MCF 10A (cell line): ENCODE measurements at regions of chr5 and their contacts with region 1.

Region 1: GRCh38 chr5:42889311-42889933 is 77.7 kb upstream of the SELENOP start:
- DNase-seq: peak; percentile 88
- H3K4me3 Mint-ChIP-seq: no peak overlapping the region
- H3K27ac Mint-ChIP-seq: no peak overlapping the region
- H3K4me1 Mint-ChIP-seq: no peaks in the 10 kb centered on the region
- H3K27me3 Mint-ChIP-seq: no peaks in the 10 kb centered on the region
- CTCF ChIP-seq: peak; percentile 85

Region 2: GRCh38 chr5:42005561-42006153 is 883.8 kb before region 1 on chr5:
- CTCF ChIA-PET with region 1: interaction called, 5 read pairs
- POLR2A ChIA-PET with region 1: no interaction called
- intact Hi-C with region 1: loop called (anchors 1 kb)
- DNase-seq: peak; percentile 33
- H3K4me3 Mint-ChIP-seq: no peak overlapping the region
- H3K27ac Mint-ChIP-seq: no peak overlapping the region
- H3K4me1 Mint-ChIP-seq: no peaks in the 10 kb centered on the region
- H3K27me3 Mint-ChIP-seq: no peaks in the 10 kb centered on the region
- CTCF ChIP-seq: peak; percentile 69

Region 3: DNA sequence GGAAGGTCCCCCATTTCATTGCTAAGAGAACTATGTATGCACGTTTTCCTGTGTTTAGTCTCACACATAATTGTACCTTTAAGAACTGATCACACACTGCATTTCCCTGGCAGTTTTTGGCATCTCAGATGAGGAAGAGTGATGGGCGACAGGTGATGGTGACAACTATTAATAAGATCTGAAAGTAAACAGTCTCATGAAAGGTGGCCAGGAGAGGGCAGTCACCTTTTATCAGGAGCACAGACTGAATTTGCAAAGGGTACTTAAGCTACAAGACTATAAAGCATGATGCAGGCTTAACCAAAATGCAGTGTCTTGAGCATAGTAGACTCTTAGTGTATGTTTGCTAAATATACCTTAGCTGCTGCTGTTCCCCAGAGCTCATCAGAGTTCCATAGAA is 374.7 kb before region 1 on chr5:
- CTCF ChIA-PET with region 1: interaction called, 7 read pairs
- POLR2A ChIA-PET with region 1: no interaction called
- intact Hi-C with region 1: loop called (anchors 10 kb)
- DNase-seq: peak; percentile 29
- H3K4me3 Mint-ChIP-seq: no peak overlapping the region
- H3K27ac Mint-ChIP-seq: no peak overlapping the region
- H3K4me1 Mint-ChIP-seq: peaks cover 5% of the 10 kb centered on the region
- H3K27me3 Mint-ChIP-seq: no peaks in the 10 kb centered on the region
- CTCF ChIP-seq: peak; percentile 11

Region 4: GRCh38 chr5:42656651-42657015 is 232.8 kb before region 1 on chr5:
- CTCF ChIA-PET with region 1: interaction called, 14 read pairs
- POLR2A ChIA-PET with region 1: no interaction called
- intact Hi-C with region 1: loop called (anchors 1 kb)
- DNase-seq: peak; percentile 18
- H3K4me3 Mint-ChIP-seq: peak overlapping the region; percentile 66
- H3K27ac Mint-ChIP-seq: peak overlapping the region; percentile 25
- H3K4me1 Mint-ChIP-seq: peaks cover 15% of the 10 kb centered on the region
- H3K27me3 Mint-ChIP-seq: no peaks in the 10 kb centered on the region
- CTCF ChIP-seq: peak; percentile 16

Region 5: GRCh38 chr5:42767491-42768105 is 121.8 kb before region 1 on chr5:
- CTCF ChIA-PET with region 1: interaction called, 37 read pairs
- POLR2A ChIA-PET with region 1: interaction called, 5 read pairs
- intact Hi-C with region 1: loop called (anchors 1 kb)
- DNase-seq: peak; percentile 58
- H3K4me3 Mint-ChIP-seq: no peak overlapping the region
- H3K27ac Mint-ChIP-seq: no peak overlapping the region
- H3K4me1 Mint-ChIP-seq: peaks cover 1% of the 10 kb centered on the region
- H3K27me3 Mint-ChIP-seq: no peaks in the 10 kb centered on the region
- CTCF ChIP-seq: peak; percentile 64

Region 6: GRCh38 chr5:42811591-42812446 is 77.6 kb before region 1 on chr5 and contains the start of gene SELENOP:
- CTCF ChIA-PET with region 1: interaction called, 29 read pairs
- POLR2A ChIA-PET with region 1: interaction called, 48 read pairs
- intact Hi-C with region 1: no loop called
- DNase-seq: peak; percentile 66
- H3K4me3 Mint-ChIP-seq: peak within 1 kb of the TSS; percentile 83
- H3K27ac Mint-ChIP-seq: peak within 1 kb of the TSS; percentile 86
- H3K4me1 Mint-ChIP-seq: peaks cover 18% of the 10 kb centered on the region
- H3K27me3 Mint-ChIP-seq: no peaks in the 10 kb centered on the region
- CTCF ChIP-seq: no peak
- total RNA-seq, gene SELENOP: 5.8 and 8.3 TPM in 2 replicates

Region 7: GRCh38 chr5:42876375-42876844 is 13.0 kb before region 1 on chr5:
- CTCF ChIA-PET with region 1: interaction called, 23 read pairs
- POLR2A ChIA-PET with region 1: no interaction called
- intact Hi-C with region 1: no loop called
- DNase-seq: no peak
- H3K4me3 Mint-ChIP-seq: no peak overlapping the region
- H3K27ac Mint-ChIP-seq: no peak overlapping the region
- H3K4me1 Mint-ChIP-seq: no peaks in the 10 kb centered on the region
- H3K27me3 Mint-ChIP-seq: no peaks in the 10 kb centered on the region
- CTCF ChIP-seq: no peak

Region 8: DNA sequence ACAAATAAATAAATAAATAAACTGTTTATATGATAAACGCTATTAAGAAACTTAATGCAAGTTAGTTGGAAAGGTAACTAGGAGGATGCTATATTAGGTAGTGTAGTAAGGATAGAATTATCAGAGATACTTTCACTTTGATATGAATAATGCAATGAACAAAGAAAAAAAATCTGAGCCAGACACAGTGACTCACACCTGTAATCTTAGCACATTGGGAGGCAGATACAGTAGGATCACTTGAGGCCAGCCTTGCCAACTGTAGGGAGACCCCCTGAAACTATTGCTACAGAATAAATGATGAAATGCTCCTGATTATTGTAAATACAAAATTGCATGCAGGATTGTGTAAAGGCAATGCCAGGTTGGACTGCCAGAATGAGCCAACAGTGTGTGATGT is 41.5 kb after region 1 on chr5:
- CTCF ChIA-PET with region 1: no interaction called
- POLR2A ChIA-PET with region 1: no interaction called
- intact Hi-C with region 1: no loop called
- DNase-seq: peak; percentile 62
- H3K4me3 Mint-ChIP-seq: no peak overlapping the region
- H3K27ac Mint-ChIP-seq: no peak overlapping the region
- H3K4me1 Mint-ChIP-seq: no peaks in the 10 kb centered on the region
- H3K27me3 Mint-ChIP-seq: no peaks in the 10 kb centered on the region
- CTCF ChIP-seq: no peak